Posterior vena cava (tissue), 2 donors: ENCODE measurements at regions of chr20 and their contacts with region 1.

Region 1: GRCh38 chr20:35472209-35472608 is 16.8 kb downstream of the CEP250 start:
- DNase-seq: no peak

Region 2: DNA sequence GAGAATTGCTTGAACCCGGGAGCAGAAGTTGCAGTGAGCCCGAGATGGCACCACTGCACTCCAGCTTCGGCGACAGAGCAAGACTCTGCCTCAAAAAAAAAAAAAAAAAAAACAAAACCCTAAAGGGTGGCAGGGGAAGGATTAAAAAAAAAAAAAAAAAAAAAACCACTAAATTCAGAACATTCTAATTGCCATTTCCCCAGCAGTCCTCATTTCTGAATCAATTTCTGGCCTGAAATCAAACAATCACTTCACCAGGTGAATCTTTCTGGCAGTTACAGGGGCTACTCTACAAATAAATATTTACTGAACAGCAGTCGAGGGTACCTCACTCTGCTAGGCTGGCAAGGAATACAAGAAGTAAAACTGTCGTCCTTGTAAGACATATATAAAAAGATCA is 61.6 kb before region 1 on chr20:
- intact Hi-C with region 1: no loop called
- DNase-seq: no peak

Region 3: GRCh38 chr20:35421322-35421721 is 50.9 kb before region 1 on chr20:
- intact Hi-C with region 1: no loop called
- DNase-seq: no peak

Region 4: GRCh38 chr20:35523298-35523888 is 51.2 kb after region 1 on chr20:
- intact Hi-C with region 1: loop called in 1 of 2 experiments (anchors 1 kb)
- DNase-seq: peak; percentile 67